Mucosa of descending colon (tissue), 3 donors: ENCODE measurements at regions of chr11 and their contacts with region 1.

Region 1: GRCh38 chr11:57249384-57250319 is 12.6 kb upstream of the APLNR start:
- DNase-seq: peak; percentile 63 to 88 (median 84)
- ATAC-seq: peak; percentile 90
- H3K4me3 ChIP-seq: no peak overlapping the region
- H3K4me1 ChIP-seq: no peaks in the 10 kb centered on the region
- CTCF ChIP-seq: peak; percentile 50

Region 2: DNA sequence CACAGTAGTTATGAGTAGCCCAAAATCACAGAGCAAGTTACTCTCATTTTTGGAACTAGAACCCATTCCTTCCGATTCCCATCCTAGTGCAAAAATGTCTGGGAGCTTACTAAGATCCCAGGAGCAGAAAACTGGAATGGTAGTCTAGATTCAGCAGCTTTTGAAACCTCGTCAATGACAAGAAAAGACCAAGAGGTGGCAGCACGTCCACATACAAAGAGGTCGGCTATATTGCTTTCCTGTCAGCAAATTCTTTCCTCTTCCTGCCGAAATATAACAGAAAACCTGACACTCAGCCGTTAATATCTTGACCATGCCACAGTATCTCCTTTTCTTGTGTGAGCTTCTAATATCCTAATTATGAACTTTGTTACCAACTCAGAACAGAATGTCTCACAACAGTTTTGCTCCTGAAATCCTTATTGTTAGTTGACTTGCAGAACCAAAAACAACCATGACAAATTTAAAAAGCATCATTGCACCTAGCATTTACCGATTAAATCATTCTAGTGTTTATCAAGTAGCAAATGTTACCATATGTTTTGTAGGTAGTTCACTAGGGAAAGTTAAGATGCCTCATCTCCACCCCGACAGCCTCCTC is 408.3 kb before region 1 on chr11:
- intact Hi-C with region 1: loop called (anchors 5 to 10 kb)
- DNase-seq: peak in 1 of 3 donors; percentile 77
- ATAC-seq: peak; percentile 89
- H3K4me3 ChIP-seq: no peak overlapping the region
- H3K4me1 ChIP-seq: peaks cover 2% of the 10 kb centered on the region
- CTCF ChIP-seq: peak; percentile 37

Region 3: DNA sequence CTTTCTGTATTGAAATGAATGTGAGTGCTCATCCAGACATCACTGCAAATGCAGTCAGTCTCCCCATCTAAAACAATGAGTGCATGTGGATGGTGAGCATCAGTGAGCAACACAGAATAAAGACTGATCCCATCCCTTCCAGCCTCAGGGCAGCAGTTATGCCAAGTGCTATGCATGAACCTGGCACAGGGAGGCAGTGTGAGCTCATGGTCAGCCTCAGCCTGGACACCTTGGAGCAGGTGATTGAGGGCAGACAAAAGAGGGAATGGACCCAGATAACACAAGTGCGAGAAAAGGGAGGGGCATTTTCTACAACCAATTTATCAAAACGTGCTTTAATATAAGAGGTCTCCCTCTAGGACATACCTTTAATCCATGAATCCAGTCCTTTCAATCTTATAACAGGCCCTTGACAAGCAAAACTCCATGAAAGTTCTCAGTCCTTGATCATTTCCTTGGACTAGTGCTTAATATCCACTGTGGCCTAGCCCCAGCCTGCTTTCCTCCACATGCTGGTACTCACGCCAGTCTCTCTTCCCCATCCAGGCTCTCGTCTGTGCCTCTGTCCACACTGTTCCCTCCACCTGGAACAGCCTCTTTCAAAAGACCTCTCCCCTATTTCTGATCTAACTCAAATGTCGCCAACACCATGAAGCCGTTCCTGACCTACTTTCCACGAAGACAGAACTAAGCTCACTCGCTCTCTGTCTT is 118.4 kb before region 1 on chr11:
- intact Hi-C with region 1: loop called (anchors 5 to 10 kb)
- DNase-seq: peak in 2 of 3 donors; percentile 58 to 61
- ATAC-seq: peak; percentile 79
- H3K4me3 ChIP-seq: no peak overlapping the region
- H3K4me1 ChIP-seq: no peaks in the 10 kb centered on the region
- CTCF ChIP-seq: no peak

Region 4: GRCh38 chr11:57527056-57527631 is 277.5 kb after region 1 on chr11:
- intact Hi-C with region 1: no loop called
- DNase-seq: peak in 2 of 3 donors; percentile 76 to 93
- ATAC-seq: peak; percentile 24
- H3K4me3 ChIP-seq: no peak overlapping the region
- H3K4me1 ChIP-seq: peaks cover 13% of the 10 kb centered on the region
- CTCF ChIP-seq: peak; percentile 83